CD14-positive monocyte (primary cell): ENCODE measurements at regions of chr17 and their contacts with region 1.

Region 1: DNA sequence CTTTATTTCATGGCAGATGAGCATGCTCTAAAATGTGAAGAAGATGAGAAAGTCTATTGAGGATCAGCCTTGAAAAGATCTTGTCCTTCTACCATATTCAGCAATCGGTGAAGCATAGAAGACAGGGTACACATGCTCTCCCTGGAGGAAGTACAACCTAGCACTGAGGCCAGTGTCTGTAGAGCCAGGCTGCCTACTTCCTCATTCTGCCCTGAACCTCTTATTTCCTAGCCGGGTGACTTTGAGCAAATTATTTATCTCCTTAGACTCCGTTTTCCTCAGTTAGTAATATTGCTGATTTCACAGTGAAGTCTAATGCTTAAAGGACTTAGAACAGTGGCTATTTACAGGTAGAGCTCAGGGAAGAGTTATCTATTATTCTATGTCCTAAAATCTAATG is 58.4 kb downstream of the TMEM100 start:
- DNase-seq: peak; percentile 67 to 82 (median 69)
- H3K4me3 ChIP-seq: peak overlapping the region in 1 of 3 experiments; percentile 25
- H3K4me3 Mint-ChIP-seq: peak overlapping the region; percentile 13 to 64
- H3K27ac ChIP-seq: peak overlapping the region in 1 of 2 donors; percentile 69
- H3K27ac Mint-ChIP-seq: peak overlapping the region; percentile 74 to 89 (median 84)
- H3K4me1 ChIP-seq: peaks cover 48 to 58% of the 10 kb centered on the region in 2 donors
- H3K4me1 Mint-ChIP-seq: peaks cover 60% of the 10 kb centered on the region
- H3K27me3 ChIP-seq: no peaks in the 10 kb centered on the region
- H3K27me3 Mint-ChIP-seq: no peaks in the 10 kb centered on the region
- CTCF ChIP-seq: no peak

Region 2: GRCh38 chr17:55580596-55581133 is 83.6 kb before region 1 on chr17:
- intact Hi-C with region 1: loop called in 1 of 2 experiments (anchors 10 kb)
- DNase-seq: no peak
- H3K4me3 ChIP-seq: no peak overlapping the region
- H3K4me3 Mint-ChIP-seq: no peak overlapping the region
- H3K27ac ChIP-seq: no peak overlapping the region
- H3K27ac Mint-ChIP-seq: no peak overlapping the region
- H3K4me1 ChIP-seq: peaks cover 49 to 65% of the 10 kb centered on the region in 2 donors
- H3K4me1 Mint-ChIP-seq: peaks cover 35% of the 10 kb centered on the region
- H3K27me3 ChIP-seq: no peaks in the 10 kb centered on the region
- H3K27me3 Mint-ChIP-seq: no peaks in the 10 kb centered on the region
- CTCF ChIP-seq: no peak

Region 3: DNA sequence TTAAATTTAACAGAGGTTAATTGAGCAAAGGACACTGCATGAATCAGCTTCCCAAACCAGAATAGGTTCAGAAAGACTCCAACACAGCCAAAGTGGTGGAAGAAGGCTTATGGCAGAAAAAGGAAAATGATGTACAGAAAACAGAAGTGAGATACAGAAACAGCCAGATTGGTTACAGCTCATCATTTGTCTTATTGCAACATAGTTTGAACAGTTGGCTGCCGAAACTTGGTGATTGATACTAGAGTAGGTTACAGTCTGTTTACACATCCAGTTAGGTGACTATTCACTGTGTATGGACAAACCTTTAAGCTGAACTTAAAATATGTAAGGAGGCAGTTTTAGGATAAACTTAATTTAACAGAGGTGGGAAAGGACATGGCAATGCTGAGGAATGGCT is 40.1 kb after region 1 on chr17:
- intact Hi-C with region 1: loop called in 1 of 2 experiments (anchors 5 kb)
- DNase-seq: peak; percentile 49 to 74 (median 66)
- H3K4me3 ChIP-seq: no peak overlapping the region
- H3K4me3 Mint-ChIP-seq: no peak overlapping the region
- H3K27ac ChIP-seq: no peak overlapping the region
- H3K27ac Mint-ChIP-seq: peak overlapping the region in 4 of 7 donors; percentile 32 to 82 (median 65)
- H3K4me1 ChIP-seq: peaks cover 9 to 11% of the 10 kb centered on the region in 2 donors
- H3K4me1 Mint-ChIP-seq: peaks cover 11% of the 10 kb centered on the region
- H3K27me3 ChIP-seq: no peaks in the 10 kb centered on the region
- H3K27me3 Mint-ChIP-seq: peaks cover 0 to 2% (median 0%) of the 10 kb centered on the region in 3 donors
- CTCF ChIP-seq: no peak

Region 4: DNA sequence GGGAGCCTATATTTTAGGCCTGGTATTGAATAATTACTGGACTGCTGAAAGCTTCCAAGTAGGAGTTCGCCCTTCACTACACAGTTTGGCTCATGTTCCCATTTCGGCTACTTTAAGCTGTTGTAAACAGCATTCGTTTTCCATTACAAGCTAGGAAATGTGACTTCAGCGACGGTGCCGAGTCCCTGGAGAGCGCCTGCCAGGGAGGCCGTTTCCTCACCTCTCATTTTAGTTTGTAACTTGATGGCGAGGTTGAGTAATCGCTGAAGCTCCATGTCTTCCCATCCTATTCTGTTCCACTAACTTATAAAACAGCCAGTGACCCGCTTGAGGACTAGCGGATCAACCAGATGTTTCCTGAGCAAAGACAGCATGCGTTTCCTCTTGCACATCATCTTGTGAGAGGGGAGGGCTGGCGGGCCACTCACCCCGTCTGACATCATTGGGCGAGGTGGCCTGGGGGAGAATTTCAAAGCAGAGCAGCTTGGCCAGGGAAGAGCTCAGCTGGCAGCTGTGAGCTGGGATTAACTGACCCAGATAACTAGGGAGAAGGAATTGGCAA is 119.5 kb after region 1 on chr17:
- intact Hi-C with region 1: no loop called
- DNase-seq: peak in 1 of 3 donors; percentile 45
- H3K4me3 ChIP-seq: no peak overlapping the region
- H3K4me3 Mint-ChIP-seq: peak overlapping the region in 1 of 2 donors; percentile 13
- H3K27ac ChIP-seq: no peak overlapping the region
- H3K27ac Mint-ChIP-seq: peak overlapping the region in 1 of 7 donors; percentile 1
- H3K4me1 ChIP-seq: no peaks in the 10 kb centered on the region
- H3K4me1 Mint-ChIP-seq: peaks cover 11% of the 10 kb centered on the region
- H3K27me3 ChIP-seq: no peaks in the 10 kb centered on the region
- H3K27me3 Mint-ChIP-seq: no peaks in the 10 kb centered on the region
- CTCF ChIP-seq: no peak

Region 5: GRCh38 chr17:55806745-55807495 is 142.6 kb after region 1 on chr17:
- intact Hi-C with region 1: no loop called
- DNase-seq: no peak
- H3K4me3 ChIP-seq: no peak overlapping the region
- H3K4me3 Mint-ChIP-seq: no peak overlapping the region
- H3K27ac ChIP-seq: no peak overlapping the region
- H3K27ac Mint-ChIP-seq: no peak overlapping the region
- H3K4me1 ChIP-seq: no peaks in the 10 kb centered on the region
- H3K4me1 Mint-ChIP-seq: no peaks in the 10 kb centered on the region
- H3K27me3 ChIP-seq: no peaks in the 10 kb centered on the region
- H3K27me3 Mint-ChIP-seq: no peaks in the 10 kb centered on the region
- CTCF ChIP-seq: no peak

Region 6: GRCh38 chr17:55903028-55903690 is 238.9 kb after region 1 on chr17:
- intact Hi-C with region 1: no loop called
- DNase-seq: no peak
- H3K4me3 ChIP-seq: no peak overlapping the region
- H3K4me3 Mint-ChIP-seq: no peak overlapping the region
- H3K27ac ChIP-seq: no peak overlapping the region
- H3K27ac Mint-ChIP-seq: no peak overlapping the region
- H3K4me1 ChIP-seq: no peaks in the 10 kb centered on the region
- H3K4me1 Mint-ChIP-seq: no peaks in the 10 kb centered on the region
- H3K27me3 ChIP-seq: no peaks in the 10 kb centered on the region
- H3K27me3 Mint-ChIP-seq: peaks cover 0 to 3% (median 2%) of the 10 kb centered on the region in 3 donors
- CTCF ChIP-seq: no peak